Naive thymus-derived CD4-positive, alpha-beta T cell (primary cell): ENCODE measurements at regions of chr15 and their contacts with region 1.

Region 1: DNA sequence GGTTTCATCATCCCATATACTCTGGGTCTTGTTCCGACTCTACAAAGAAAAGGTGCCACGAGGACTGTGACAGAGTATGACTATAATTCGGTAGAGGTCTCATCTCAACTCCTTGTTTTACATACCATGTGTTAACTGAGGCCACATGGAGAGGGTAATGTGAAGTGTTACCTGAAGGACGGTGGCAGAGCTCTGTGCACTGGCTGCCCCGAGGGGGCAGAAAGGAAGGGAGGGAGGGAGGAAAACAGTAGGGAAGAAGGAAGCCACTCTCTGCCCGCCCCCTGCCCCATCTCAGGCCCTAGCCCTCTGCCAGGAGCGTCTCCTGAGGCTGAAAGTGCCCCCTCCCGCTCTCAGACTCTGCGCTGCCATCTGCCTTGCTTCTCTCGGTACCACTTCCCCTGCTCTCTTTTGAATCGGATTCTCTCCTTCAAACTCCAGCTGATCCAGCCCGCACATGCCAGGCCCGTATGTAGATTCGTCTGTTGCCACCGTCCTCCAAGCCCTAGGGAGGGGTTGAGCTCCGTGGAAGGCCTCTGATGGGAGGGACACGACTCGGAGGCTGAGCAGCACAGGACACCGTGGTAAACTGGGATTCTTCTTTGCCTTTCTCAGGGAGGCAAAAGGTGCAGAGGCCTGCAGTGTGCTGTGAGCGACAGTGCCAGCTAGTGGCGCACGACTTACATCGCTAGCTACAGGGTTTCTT is 70.5 kb upstream of the ATP10A start:
- DNase-seq: peak; percentile 36 to 77 (median 68)
- ATAC-seq: peak; percentile 97
- H3K4me3 ChIP-seq: peak overlapping the region; percentile 73
- H3K4me3 Mint-ChIP-seq: peak overlapping the region; percentile 78 to 98 (median 90)
- H3K27ac ChIP-seq: no peak overlapping the region
- H3K27ac Mint-ChIP-seq: peak overlapping the region in 7 of 9 donors; percentile 21 to 79 (median 51)
- H3K4me1 ChIP-seq: no peaks in the 10 kb centered on the region
- H3K4me1 Mint-ChIP-seq: peaks cover 0 to 10% (median 8%) of the 10 kb centered on the region in 7 donors
- H3K27me3 ChIP-seq: no peaks in the 10 kb centered on the region
- H3K27me3 Mint-ChIP-seq: peaks cover 0 to 11% (median 5%) of the 10 kb centered on the region in 5 donors

Region 2: GRCh38 chr15:25508369-25509002 is 425.1 kb before region 1 on chr15:
- CTCF ChIA-PET with region 1: interaction called, 8 read pairs
- POLR2A ChIA-PET with region 1: no interaction called
- intact Hi-C with region 1: loop called in 1 of 2 experiments (anchors 1 kb)
- DNase-seq: peak in 4 of 9 donors; percentile 6 to 19 (median 8)
- ATAC-seq: no peak
- H3K4me3 ChIP-seq: no peak overlapping the region
- H3K4me3 Mint-ChIP-seq: no peak overlapping the region
- H3K27ac ChIP-seq: no peak overlapping the region
- H3K27ac Mint-ChIP-seq: no peak overlapping the region
- H3K4me1 ChIP-seq: no peaks in the 10 kb centered on the region
- H3K4me1 Mint-ChIP-seq: peaks cover 0 to 2% (median 0%) of the 10 kb centered on the region in 7 donors
- H3K27me3 ChIP-seq: no peaks in the 10 kb centered on the region
- H3K27me3 Mint-ChIP-seq: peaks cover 0 to 15% (median 10%) of the 10 kb centered on the region in 5 donors

Region 3: GRCh38 chr15:25739687-25740121 is 193.9 kb before region 1 on chr15:
- CTCF ChIA-PET with region 1: interaction called, 22 read pairs
- POLR2A ChIA-PET with region 1: no interaction called
- intact Hi-C with region 1: loop called (anchors 1 to 2 kb)
- DNase-seq: peak in 7 of 9 donors; percentile 42 to 60 (median 56)
- ATAC-seq: peak; percentile 82
- H3K4me3 ChIP-seq: no peak overlapping the region
- H3K4me3 Mint-ChIP-seq: peak overlapping the region in 1 of 10 donors; percentile 2
- H3K27ac ChIP-seq: no peak overlapping the region
- H3K27ac Mint-ChIP-seq: peak overlapping the region in 8 of 9 donors; percentile 1 to 69 (median 18)
- H3K4me1 ChIP-seq: no peaks in the 10 kb centered on the region
- H3K4me1 Mint-ChIP-seq: peaks cover 19 to 52% (median 42%) of the 10 kb centered on the region in 7 donors
- H3K27me3 ChIP-seq: no peaks in the 10 kb centered on the region
- H3K27me3 Mint-ChIP-seq: no peaks in the 10 kb centered on the region

Region 4: GRCh38 chr15:25783607-25784540 is 149.7 kb before region 1 on chr15:
- CTCF ChIA-PET with region 1: interaction called, 15 read pairs
- POLR2A ChIA-PET with region 1: no interaction called
- intact Hi-C with region 1: loop called (anchors 1 to 2 kb)
- DNase-seq: peak in 6 of 9 donors; percentile 22 to 50 (median 40)
- ATAC-seq: peak; percentile 52
- H3K4me3 ChIP-seq: no peak overlapping the region
- H3K4me3 Mint-ChIP-seq: peak overlapping the region in 1 of 10 donors; percentile 16
- H3K27ac ChIP-seq: no peak overlapping the region
- H3K27ac Mint-ChIP-seq: peak overlapping the region; percentile 1 to 88 (median 62)
- H3K4me1 ChIP-seq: peaks cover 0 to 5% of the 10 kb centered on the region in 2 donors
- H3K4me1 Mint-ChIP-seq: peaks cover 37 to 62% (median 45%) of the 10 kb centered on the region in 7 donors
- H3K27me3 ChIP-seq: no peaks in the 10 kb centered on the region
- H3K27me3 Mint-ChIP-seq: no peaks in the 10 kb centered on the region

Region 5: DNA sequence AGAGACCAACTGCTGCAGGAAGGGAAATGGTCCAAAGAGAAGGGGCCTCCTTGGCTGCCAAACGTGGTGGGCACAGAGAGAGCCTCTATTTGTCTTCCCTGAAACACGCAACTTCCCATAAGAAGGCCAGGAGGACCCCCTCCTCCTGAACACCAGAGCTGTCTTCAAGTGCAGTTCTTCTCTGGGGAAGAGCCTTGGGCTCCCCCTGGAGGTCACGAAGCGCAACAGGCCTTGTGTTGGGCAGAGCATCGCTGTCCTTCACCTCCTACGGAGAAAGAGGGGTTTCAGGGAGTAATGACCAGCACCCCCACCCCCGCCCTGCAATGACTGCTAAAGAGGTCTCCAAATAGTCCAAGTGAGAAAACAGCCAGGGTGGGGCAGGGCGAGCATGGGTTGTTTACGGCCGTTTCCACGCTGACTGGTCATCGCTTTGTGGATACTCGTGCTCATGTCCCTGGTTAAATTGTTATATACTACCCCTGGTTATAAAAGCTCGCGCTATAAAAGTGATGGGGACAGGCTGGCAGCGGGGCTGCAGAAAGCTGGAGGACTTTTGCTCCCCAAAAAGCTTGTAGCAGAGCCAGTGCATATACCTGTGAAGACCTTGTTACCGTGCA is 327.0 kb after region 1 on chr15:
- CTCF ChIA-PET with region 1: no interaction called
- POLR2A ChIA-PET with region 1: no interaction called
- intact Hi-C with region 1: loop called in 1 of 2 experiments (anchors 5 kb)
- DNase-seq: peak in 6 of 9 donors; percentile 3 to 25 (median 14)
- ATAC-seq: peak; percentile 40
- H3K4me3 ChIP-seq: no peak overlapping the region
- H3K4me3 Mint-ChIP-seq: no peak overlapping the region
- H3K27ac ChIP-seq: no peak overlapping the region
- H3K27ac Mint-ChIP-seq: no peak overlapping the region
- H3K4me1 ChIP-seq: no peaks in the 10 kb centered on the region
- H3K4me1 Mint-ChIP-seq: no peaks in the 10 kb centered on the region
- H3K27me3 ChIP-seq: no peaks in the 10 kb centered on the region
- H3K27me3 Mint-ChIP-seq: peaks cover 0 to 43% (median 17%) of the 10 kb centered on the region in 5 donors